HepG2 (cell line): ENCODE measurements at regions of chr5 and their contacts with region 1.

Region 1: DNA sequence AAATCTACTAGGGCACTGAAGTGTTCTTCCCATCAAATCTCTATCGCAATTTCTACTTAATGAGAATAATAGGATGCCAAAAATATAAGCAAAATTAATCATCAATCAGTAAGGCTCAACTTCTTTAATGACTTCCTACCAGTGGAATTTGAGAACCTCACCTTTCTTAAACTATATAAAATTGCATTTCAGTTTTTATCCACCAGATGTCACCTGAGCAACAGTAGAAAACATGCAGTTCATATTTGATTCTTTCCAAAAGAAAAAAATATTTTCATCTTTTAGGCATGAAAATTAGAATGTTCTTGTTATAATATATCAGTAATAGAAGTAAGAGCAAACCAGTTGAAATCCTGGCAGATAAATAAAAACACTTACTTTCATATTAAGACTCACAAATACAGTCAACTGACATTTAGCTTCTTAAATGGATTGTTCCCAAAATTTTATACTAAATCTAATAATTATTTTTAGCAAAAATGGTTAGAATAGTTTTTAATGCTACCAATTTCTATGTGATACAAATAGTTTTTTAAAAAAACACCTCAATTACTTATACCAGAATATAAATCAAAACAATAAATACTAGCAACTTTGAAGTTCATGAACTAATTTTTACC is 13.4 kb upstream of the CCDC112 start:
- DNase-seq: peak; percentile 26
- ATAC-seq: no peak
- H3K4me3 ChIP-seq: no peak overlapping the region
- H3K27ac ChIP-seq: no peak overlapping the region
- H3K4me1 ChIP-seq: no peaks in the 10 kb centered on the region
- H3K27me3 ChIP-seq: no peaks in the 10 kb centered on the region
- CTCF ChIP-seq: peak; percentile 52
- EP300 ChIP-seq: no peak
- POLR2A ChIP-seq: no peak
- RAD21 ChIP-seq: peak; percentile 31; the same call in 1 of the 2 replicates

Region 2: DNA sequence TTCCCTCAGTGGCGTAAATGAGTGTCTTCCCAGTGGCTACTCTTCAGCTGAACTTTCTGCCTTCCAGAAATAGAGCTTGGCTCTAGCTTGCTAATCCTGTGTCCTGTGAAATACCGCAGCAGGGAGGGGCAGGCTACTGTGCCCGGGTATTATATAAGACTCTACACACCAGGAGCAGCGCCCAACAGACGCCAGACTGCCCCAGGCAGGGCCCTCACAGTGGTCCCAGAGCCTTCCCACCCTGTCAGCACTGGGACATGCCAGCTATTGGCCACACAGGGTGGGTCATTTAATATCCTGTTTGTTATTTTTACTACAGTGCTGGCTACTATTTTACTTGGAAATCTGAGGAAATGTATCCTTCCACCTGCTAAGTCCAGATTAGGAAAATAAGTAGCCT is 113.7 kb after region 1 on chr5:
- CTCF ChIA-PET with region 1: no interaction called
- POLR2A ChIA-PET with region 1: no interaction called
- in situ Hi-C with region 1: no loop called
- intact Hi-C with region 1: no loop called
- DNase-seq: no peak
- ATAC-seq: no peak
- H3K4me3 ChIP-seq: no peak overlapping the region
- H3K27ac ChIP-seq: no peak overlapping the region
- H3K4me1 ChIP-seq: no peaks in the 10 kb centered on the region
- H3K27me3 ChIP-seq: no peaks in the 10 kb centered on the region; a peak in 2 of 5 replicates
- CTCF ChIP-seq: no peak
- EP300 ChIP-seq: no peak
- POLR2A ChIP-seq: no peak
- RAD21 ChIP-seq: no peak

Region 3: GRCh38 chr5:115579747-115580173 is 269.9 kb after region 1 on chr5:
- CTCF ChIA-PET with region 1: interaction called, 24 read pairs
- POLR2A ChIA-PET with region 1: no interaction called
- in situ Hi-C with region 1: no loop called
- intact Hi-C with region 1: loop called (anchors 1 kb)
- DNase-seq: no peak
- ATAC-seq: no peak
- H3K4me3 ChIP-seq: no peak overlapping the region
- H3K27ac ChIP-seq: no peak overlapping the region
- H3K4me1 ChIP-seq: no peaks in the 10 kb centered on the region
- H3K27me3 ChIP-seq: peaks cover 0 to 3% of the 10 kb centered on the region in 2 experiments; a peak in 2 of 5 replicates
- CTCF ChIP-seq: no peak
- EP300 ChIP-seq: no peak
- POLR2A ChIP-seq: no peak
- RAD21 ChIP-seq: no peak

Region 4: DNA sequence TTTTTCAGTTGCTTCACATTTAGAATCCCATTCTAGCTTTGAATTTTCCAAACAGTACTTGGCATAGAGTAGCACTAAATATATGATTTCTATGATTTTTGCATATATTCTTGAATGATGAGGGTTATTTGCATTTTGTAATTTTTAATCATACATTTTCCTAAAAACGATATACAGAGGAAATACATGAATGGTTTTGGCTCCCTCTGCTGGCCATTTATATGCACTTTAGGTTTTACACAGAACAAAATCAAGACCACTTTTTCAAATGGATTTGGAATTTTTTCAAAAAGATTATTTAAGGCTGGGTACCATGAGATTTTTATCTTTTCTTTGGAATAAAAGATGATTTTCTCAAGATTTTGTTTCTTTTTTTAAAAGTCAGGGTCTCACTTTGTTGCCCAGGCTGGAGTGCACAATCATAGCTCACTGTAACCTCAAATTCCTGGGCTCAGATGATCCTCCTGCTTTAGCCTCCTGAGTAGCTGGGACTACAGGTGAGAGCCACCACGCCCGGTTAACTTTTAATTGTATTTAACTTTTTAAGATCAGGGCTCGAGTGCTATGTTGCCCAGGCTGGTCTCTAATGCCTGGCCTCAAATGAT is 758.3 kb after region 1 on chr5:
- CTCF ChIA-PET with region 1: no interaction called
- POLR2A ChIA-PET with region 1: no interaction called
- in situ Hi-C with region 1: loop called (anchors 25 kb)
- intact Hi-C with region 1: loop called (anchors 10 kb)
- DNase-seq: peak; percentile 44
- ATAC-seq: peak; percentile 50; the same call in 1 of the 3 replicates
- H3K4me3 ChIP-seq: no peak overlapping the region
- H3K27ac ChIP-seq: no peak overlapping the region
- H3K4me1 ChIP-seq: no peaks in the 10 kb centered on the region
- H3K27me3 ChIP-seq: no peaks in the 10 kb centered on the region
- CTCF ChIP-seq: peak; percentile 59
- EP300 ChIP-seq: no peak
- POLR2A ChIP-seq: no peak
- RAD21 ChIP-seq: no peak